ENCODE measurements at regions of chr6 and their contacts with region 1.

Region 1: DNA sequence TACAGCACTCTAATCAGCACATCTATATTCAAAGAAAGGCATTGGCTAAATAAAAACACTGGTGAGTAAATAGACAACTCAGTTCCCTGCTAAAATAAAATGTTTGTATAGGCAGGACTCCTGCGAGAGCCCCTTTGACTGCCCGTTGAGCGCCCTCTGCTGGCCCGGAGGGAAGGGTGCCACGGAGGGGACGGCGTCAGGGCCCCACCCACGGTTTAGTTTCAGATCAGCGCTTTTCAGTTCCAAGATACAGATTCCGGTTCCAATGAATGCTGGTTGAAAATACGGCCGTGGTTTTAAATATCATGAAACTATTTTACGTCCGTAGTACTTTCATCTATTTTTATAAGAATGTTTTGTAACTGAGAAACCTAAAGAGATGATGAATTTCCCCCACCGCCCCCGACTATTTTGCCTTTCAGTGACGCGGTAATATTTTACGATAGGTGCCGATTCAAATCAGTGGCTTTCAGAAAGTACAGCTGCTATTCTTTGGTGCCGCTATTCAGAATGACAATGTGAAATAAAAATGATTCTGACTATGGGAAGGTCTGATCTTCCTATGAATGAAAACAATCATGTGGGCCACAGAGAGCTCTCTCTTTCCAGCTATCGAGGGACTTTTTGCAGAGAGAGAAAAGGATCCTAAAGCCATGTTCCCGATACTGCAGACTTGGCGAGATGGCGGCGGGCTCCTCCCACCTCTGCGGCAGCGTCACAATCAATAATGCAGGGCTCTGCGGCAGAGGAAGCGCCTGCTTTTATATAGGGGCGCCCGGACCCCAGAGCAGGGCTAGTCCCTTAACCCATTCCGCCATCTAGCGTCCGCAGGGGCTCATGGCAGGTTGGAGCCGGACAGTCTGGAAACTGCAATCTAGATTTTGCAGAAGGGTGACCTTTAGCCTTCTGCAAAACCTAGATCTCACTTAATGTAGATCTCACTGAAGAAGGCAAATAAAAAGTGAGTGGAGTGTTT is 10.6 kb upstream of the CCN6 start:
- DNase-seq: peak; percentile 94
- H3K4me3 Mint-ChIP-seq: peak overlapping the region; percentile 84
- H3K27ac Mint-ChIP-seq: peak overlapping the region; percentile 96
- H3K4me1 Mint-ChIP-seq: peaks cover 41% of the 10 kb centered on the region
- H3K27me3 Mint-ChIP-seq: no peaks in the 10 kb centered on the region

Region 2: DNA sequence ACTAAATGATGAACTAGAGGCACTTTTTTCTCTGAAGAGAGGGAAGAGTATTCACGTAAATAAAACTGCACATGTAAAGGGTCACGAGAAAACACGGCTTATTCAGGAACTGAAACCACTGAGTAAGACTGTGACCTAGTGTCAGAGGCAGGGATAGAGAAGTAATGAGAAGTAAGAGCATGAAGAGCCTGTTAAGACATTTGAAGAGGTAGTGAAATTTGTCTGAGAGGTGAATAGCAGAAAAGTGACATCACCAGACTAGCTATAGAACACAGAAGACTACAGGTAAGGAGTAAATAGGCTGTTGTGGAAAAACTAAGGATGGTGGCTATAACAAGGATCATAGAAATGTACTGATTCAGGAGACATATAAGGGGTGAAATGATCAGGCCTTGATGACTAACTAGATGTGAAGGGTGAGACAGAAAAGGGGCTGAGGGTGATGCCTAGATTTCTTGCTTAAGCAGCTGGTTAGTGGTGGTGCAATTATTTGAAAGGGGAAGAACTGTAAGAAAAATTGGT is 637.1 kb before region 1 on chr6:
- CTCF ChIA-PET with region 1: no interaction called
- POLR2A ChIA-PET with region 1: no interaction called
- intact Hi-C with region 1: loop called (anchors 5 kb)
- DNase-seq: no peak
- H3K4me3 Mint-ChIP-seq: no peak overlapping the region
- H3K27ac Mint-ChIP-seq: peak overlapping the region; percentile 25
- H3K4me1 Mint-ChIP-seq: peaks cover 13% of the 10 kb centered on the region
- H3K27me3 Mint-ChIP-seq: no peaks in the 10 kb centered on the region

Region 3: GRCh38 chr6:111709615-111710398 is 333.5 kb before region 1 on chr6:
- CTCF ChIA-PET with region 1: interaction called, 49 read pairs
- POLR2A ChIA-PET with region 1: no interaction called
- intact Hi-C with region 1: loop called (anchors 1 kb)
- DNase-seq: peak; percentile 68
- H3K4me3 Mint-ChIP-seq: no peak overlapping the region
- H3K27ac Mint-ChIP-seq: peak overlapping the region; percentile 74
- H3K4me1 Mint-ChIP-seq: peaks cover 53% of the 10 kb centered on the region
- H3K27me3 Mint-ChIP-seq: no peaks in the 10 kb centered on the region

Region 4: DNA sequence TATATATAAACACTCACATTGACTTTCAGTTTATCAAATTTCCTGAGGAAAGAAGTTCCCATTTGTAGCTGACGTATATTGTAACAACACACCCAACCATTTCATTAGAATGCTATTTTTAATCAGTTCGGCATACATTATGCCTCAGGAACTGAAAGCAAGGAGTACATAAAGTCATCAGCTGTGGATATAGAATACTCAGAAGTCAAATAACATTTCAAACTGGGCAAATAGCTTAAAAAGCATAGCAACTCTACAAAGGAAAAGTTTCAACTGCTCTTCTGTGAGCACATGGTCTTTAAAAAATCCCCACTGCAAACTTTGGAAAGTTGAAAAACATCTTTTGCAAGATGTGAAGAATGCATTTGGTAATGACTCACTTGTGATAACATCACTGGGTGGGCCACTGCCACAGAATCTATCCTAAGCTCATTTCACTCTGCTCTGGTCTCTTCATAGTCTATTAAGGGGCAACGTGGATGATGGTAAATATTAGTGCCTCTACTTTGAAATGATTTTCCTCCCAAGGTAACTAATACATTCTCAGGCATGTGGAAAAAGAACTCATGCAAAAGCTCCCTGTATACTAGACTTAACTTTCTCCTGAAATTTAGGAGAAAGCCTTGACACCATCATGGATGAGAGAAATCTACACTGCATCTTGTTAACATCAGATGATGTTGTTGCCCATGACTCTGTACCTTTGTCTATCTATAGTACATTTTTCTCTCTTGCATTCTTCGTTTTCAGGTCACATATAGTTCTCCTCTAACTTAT is 219.3 kb before region 1 on chr6:
- CTCF ChIA-PET with region 1: interaction called, 12 read pairs
- POLR2A ChIA-PET with region 1: interaction called, 3 read pairs
- intact Hi-C with region 1: loop called (anchors 1 kb)
- DNase-seq: peak; percentile 44
- H3K4me3 Mint-ChIP-seq: peak overlapping the region; percentile 21
- H3K27ac Mint-ChIP-seq: peak overlapping the region; percentile 91
- H3K4me1 Mint-ChIP-seq: peaks cover 80% of the 10 kb centered on the region
- H3K27me3 Mint-ChIP-seq: no peaks in the 10 kb centered on the region

Region 5: GRCh38 chr6:111973118-111973761 is 70.1 kb before region 1 on chr6:
- CTCF ChIA-PET with region 1: interaction called, 8 read pairs
- POLR2A ChIA-PET with region 1: interaction called, 3 read pairs
- intact Hi-C with region 1: loop called (anchors 1 kb)
- DNase-seq: peak; percentile 81
- H3K4me3 Mint-ChIP-seq: peak overlapping the region; percentile 59
- H3K27ac Mint-ChIP-seq: peak overlapping the region; percentile 89
- H3K4me1 Mint-ChIP-seq: peaks cover 63% of the 10 kb centered on the region
- H3K27me3 Mint-ChIP-seq: no peaks in the 10 kb centered on the region

Region 6: GRCh38 chr6:112018619-112019416 is 24.5 kb before region 1 on chr6:
- CTCF ChIA-PET with region 1: interaction called, 193 read pairs
- POLR2A ChIA-PET with region 1: interaction called, 13 read pairs
- intact Hi-C with region 1: loop called (anchors 1 kb)
- DNase-seq: no peak
- H3K4me3 Mint-ChIP-seq: peak overlapping the region; percentile 3
- H3K27ac Mint-ChIP-seq: peak overlapping the region; percentile 90
- H3K4me1 Mint-ChIP-seq: peaks cover 56% of the 10 kb centered on the region
- H3K27me3 Mint-ChIP-seq: no peaks in the 10 kb centered on the region

Region 7: DNA sequence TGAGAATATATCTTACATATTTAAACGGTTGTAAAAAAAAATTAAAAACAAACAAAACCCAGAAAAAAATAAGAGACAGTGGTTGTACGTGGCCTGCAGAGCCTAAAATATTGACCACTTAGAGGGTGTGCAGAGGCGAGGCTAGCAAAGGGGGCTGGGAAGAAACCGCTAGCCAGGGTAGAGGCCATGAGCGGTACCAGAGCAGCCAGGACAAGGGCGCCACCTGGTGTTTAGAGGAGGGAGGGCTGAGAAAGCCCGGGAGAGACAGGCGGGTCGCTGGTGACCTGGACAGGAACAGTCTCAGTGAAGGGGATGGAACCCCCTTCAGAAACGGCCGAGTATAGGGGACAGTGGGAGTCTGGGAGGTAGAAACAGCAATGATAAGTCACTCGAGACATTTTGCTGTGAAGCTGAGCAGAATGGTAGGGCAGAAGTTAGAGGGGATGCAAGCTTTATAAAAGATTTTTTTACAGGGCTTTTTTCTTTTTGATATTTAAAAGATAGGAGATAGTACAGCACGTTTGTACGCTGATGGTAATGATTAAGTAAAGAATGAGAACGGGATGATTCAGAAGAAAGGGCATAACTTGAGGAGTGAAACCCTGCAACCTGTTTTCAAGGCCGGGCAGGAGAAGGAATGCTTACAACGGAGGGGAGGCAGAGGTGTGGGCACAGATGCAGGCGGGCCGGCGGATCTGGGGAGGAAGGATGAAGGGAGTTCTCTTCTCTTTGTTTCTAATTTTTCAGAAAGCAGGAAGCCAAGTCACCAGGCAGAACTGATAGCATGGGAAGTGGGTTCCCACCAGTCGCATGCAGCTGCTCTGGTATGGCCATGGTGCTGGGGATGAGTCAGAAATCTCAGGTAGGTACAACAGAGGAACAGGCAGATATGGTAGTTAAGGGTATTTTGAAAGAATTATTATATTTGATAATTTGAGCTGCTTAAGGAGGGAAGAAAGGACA is 120.3 kb after region 1 on chr6:
- CTCF ChIA-PET with region 1: interaction called, 34 read pairs
- POLR2A ChIA-PET with region 1: no interaction called
- intact Hi-C with region 1: loop called (anchors 2 kb)
- DNase-seq: peak; percentile 88
- H3K4me3 Mint-ChIP-seq: peak overlapping the region; percentile 36
- H3K27ac Mint-ChIP-seq: no peak overlapping the region
- H3K4me1 Mint-ChIP-seq: peaks cover 16% of the 10 kb centered on the region
- H3K27me3 Mint-ChIP-seq: peaks cover 43% of the 10 kb centered on the region